Psoas muscle (tissue), 8 donors: ENCODE measurements at regions of chr5 and their contacts with region 1.

Region 1: GRCh38 chr5:132215329-132215728 is 12.3 kb downstream of the P4HA2 start:
- DNase-seq: peak; percentile 95 to 97
- ATAC-seq: peak; percentile 92 to 95 (median 94)
- H3K4me3 ChIP-seq: no peak overlapping the region
- H3K27ac ChIP-seq: peak overlapping the region; percentile 67
- H3K4me1 ChIP-seq: peaks cover 47% of the 10 kb centered on the region
- H3K27me3 ChIP-seq: no peaks in the 10 kb centered on the region
- CTCF ChIP-seq: no peak

Region 2: DNA sequence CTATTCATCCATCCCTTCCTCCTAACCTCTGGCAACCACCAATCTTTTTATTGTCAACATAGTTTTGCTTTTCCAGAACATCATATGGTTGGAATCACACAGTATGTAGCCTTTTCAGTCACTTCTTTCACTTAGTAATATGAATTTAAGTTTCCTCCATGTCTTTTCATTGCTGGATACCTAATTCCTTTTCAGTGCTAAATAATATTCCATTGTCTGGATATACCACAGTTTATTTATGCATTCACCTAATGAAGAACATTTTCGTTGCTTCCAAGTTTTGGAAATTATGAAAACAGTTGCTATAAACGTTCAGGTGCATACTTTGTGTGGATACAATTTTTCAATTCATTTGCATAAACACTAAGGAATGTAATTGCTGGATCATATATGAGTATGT is 347.8 kb before region 1 on chr5:
- intact Hi-C with region 1: no loop called
- DNase-seq: no peak
- ATAC-seq: no peak
- H3K4me3 ChIP-seq: no peak overlapping the region
- H3K27ac ChIP-seq: no peak overlapping the region
- H3K4me1 ChIP-seq: no peaks in the 10 kb centered on the region
- H3K27me3 ChIP-seq: no peaks in the 10 kb centered on the region
- CTCF ChIP-seq: no peak

Region 3: GRCh38 chr5:132190161-132190817 is 25.0 kb before region 1 on chr5:
- intact Hi-C with region 1: loop called in 1 of 2 experiments (anchors 2 kb)
- DNase-seq: no peak
- ATAC-seq: peak; percentile 97 to 99 (median 99)
- H3K4me3 ChIP-seq: peak overlapping the region; percentile 46
- H3K27ac ChIP-seq: peak overlapping the region; percentile 39
- H3K4me1 ChIP-seq: peaks cover 7% of the 10 kb centered on the region
- H3K27me3 ChIP-seq: no peaks in the 10 kb centered on the region
- CTCF ChIP-seq: peak; percentile 83

Region 4: GRCh38 chr5:132437604-132438266 is 222.4 kb after region 1 on chr5:
- intact Hi-C with region 1: loop called in 1 of 2 experiments (anchors 5 kb)
- DNase-seq: peak; percentile 79 to 84
- ATAC-seq: peak in 2 of 4 donors; percentile 15 to 39
- H3K4me3 ChIP-seq: no peak overlapping the region
- H3K27ac ChIP-seq: peak overlapping the region; percentile 76
- H3K4me1 ChIP-seq: peaks cover 65% of the 10 kb centered on the region
- H3K27me3 ChIP-seq: no peaks in the 10 kb centered on the region
- CTCF ChIP-seq: no peak

Region 5: DNA sequence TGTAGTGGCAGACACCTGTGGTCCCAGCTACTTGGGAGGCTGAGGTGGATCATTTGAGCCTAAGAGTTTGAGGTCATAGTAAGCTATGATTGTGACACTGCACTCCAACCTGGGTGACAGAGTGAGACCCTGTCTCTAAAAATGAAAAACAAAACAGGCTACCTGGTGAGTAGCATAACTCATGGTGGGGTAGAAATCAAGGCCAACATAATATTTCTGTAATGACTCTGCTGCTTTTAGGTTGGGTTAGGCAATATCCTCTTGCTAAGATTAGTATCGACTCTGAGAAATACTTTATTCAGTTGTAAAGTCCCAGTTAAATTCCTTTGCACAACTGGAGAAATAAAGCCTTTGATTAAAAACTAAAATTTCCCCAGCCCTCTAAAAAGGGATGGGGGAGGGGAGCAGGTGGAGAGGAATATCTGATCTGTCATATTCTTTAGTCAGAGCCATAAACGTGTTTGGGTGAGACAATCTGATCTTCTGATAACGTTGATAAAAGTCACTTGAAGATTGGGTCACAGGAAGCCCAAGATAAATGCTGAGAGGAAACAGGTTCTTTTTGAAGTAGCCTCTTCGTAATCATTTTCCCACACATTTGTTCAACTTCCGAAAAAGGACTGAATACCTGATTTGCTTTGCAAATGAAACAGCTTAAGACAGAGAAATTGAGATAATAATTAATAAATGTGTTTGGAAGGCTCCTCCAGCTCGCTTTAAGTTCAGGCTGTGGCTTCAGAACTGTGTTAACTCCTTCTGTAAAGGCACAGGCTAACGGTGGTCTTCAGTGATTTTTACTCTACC is 473.4 kb after region 1 on chr5:
- intact Hi-C with region 1: no loop called
- DNase-seq: no peak
- ATAC-seq: no peak
- H3K4me3 ChIP-seq: no peak overlapping the region
- H3K27ac ChIP-seq: no peak overlapping the region
- H3K4me1 ChIP-seq: no peaks in the 10 kb centered on the region
- H3K27me3 ChIP-seq: no peaks in the 10 kb centered on the region
- CTCF ChIP-seq: no peak